MCF 10A (cell line): ENCODE measurements at regions of chr6 and their contacts with region 1.

Region 1: GRCh38 chr6:40587240-40588069 is at the start of gene LRFN2:
- DNase-seq: peak; percentile 43
- H3K4me3 Mint-ChIP-seq: peak within 1 kb of the TSS; percentile 76
- H3K27ac Mint-ChIP-seq: no peak within 1 kb of the TSS
- H3K4me1 Mint-ChIP-seq: no peaks in the 10 kb centered on the region
- H3K27me3 Mint-ChIP-seq: peaks cover 19% of the 10 kb centered on the region
- CTCF ChIP-seq: peak; percentile 42
- total RNA-seq, gene LRFN2: not detected in 2 replicates

Region 2: GRCh38 chr6:39731565-39731964 is 855.9 kb before region 1 on chr6:
- CTCF ChIA-PET with region 1: no interaction called
- POLR2A ChIA-PET with region 1: no interaction called
- intact Hi-C with region 1: no loop called
- DNase-seq: peak; percentile 6
- H3K4me3 Mint-ChIP-seq: no peak overlapping the region
- H3K27ac Mint-ChIP-seq: no peak overlapping the region
- H3K4me1 Mint-ChIP-seq: no peaks in the 10 kb centered on the region
- H3K27me3 Mint-ChIP-seq: peaks cover 29% of the 10 kb centered on the region
- CTCF ChIP-seq: no peak

Region 3: GRCh38 chr6:40328405-40328987 is 259.0 kb before region 1 on chr6:
- CTCF ChIA-PET with region 1: no interaction called
- POLR2A ChIA-PET with region 1: no interaction called
- intact Hi-C with region 1: loop called (anchors 5 kb)
- DNase-seq: peak; percentile 30
- H3K4me3 Mint-ChIP-seq: no peak overlapping the region
- H3K27ac Mint-ChIP-seq: no peak overlapping the region
- H3K4me1 Mint-ChIP-seq: no peaks in the 10 kb centered on the region
- H3K27me3 Mint-ChIP-seq: no peaks in the 10 kb centered on the region
- CTCF ChIP-seq: peak; percentile 40

Region 4: GRCh38 chr6:40743226-40743625 is 155.8 kb after region 1 on chr6:
- CTCF ChIA-PET with region 1: no interaction called
- POLR2A ChIA-PET with region 1: no interaction called
- intact Hi-C with region 1: no loop called
- DNase-seq: no peak
- H3K4me3 Mint-ChIP-seq: no peak overlapping the region
- H3K27ac Mint-ChIP-seq: no peak overlapping the region
- H3K4me1 Mint-ChIP-seq: no peaks in the 10 kb centered on the region
- H3K27me3 Mint-ChIP-seq: no peaks in the 10 kb centered on the region
- CTCF ChIP-seq: no peak